ENCODE measurements at regions of chr3 and their contacts with region 1.

Region 1: DNA sequence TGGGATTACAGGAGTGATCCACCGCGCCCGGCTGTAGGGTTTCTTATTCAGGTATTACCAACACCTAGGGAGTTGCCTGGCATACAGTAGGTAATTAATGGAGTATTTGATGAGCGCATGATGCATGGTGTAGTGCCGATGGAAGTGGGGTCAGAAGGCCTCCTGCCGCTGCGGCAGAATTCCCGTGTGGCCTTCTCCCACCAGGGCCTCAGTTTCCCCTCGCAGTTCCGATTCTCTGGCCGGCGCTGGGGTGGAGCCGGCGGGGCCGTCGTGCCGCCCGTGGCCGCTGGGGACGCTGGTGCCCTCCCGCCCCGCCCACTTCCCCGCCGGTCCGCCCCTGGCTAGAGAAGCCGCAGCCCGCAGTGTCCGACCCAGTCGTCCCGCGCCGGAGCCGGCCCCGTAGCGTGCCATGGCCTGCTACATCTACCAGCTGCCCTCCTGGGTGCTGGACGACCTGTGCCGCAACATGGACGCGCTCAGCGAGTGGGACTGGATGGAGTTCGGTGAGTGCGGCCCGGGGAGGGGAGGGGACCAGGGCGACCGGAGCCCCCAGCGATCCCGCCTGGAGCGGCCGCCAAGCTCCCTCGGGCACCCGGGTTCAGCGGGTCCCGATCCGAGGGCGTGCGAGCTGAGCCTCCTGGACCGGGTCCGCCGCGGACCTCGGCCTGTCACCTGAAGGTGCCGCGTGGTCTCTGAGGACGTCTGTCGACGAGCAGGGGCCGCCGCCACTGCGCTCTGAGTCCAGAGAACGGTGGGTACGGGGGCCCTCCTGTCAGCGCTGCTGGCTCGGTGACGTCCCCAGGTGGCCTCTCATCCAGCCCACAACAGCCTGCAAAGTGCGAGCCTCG is at the start of gene IRAK2:
- DNase-seq: peak; percentile 71
- ATAC-seq: peak; percentile 91
- H3K4me3 ChIP-seq: peak within 1 kb of the TSS; percentile 96
- H3K27ac ChIP-seq: peak within 1 kb of the TSS; percentile 33
- H3K4me1 ChIP-seq: no peaks in the 10 kb centered on the region
- H3K27me3 ChIP-seq: no peaks in the 10 kb centered on the region
- CTCF ChIP-seq: peak; percentile 53
- total RNA-seq, gene IRAK2: 4.7 and 5.5 TPM in 2 replicates

Region 2: GRCh38 chr3:10099041-10099440 is 65.7 kb before region 1 on chr3:
- CTCF ChIA-PET with region 1: no interaction called
- POLR2A ChIA-PET with region 1: interaction called, 22 read pairs
- intact Hi-C with region 1: no loop called
- DNase-seq: no peak
- ATAC-seq: no peak
- H3K4me3 ChIP-seq: no peak overlapping the region
- H3K27ac ChIP-seq: no peak overlapping the region
- H3K4me1 ChIP-seq: no peaks in the 10 kb centered on the region
- H3K27me3 ChIP-seq: no peaks in the 10 kb centered on the region
- CTCF ChIP-seq: no peak

Region 3: GRCh38 chr3:10142707-10143566 is 21.8 kb before region 1 on chr3:
- CTCF ChIA-PET with region 1: no interaction called
- POLR2A ChIA-PET with region 1: interaction called, 16 read pairs
- intact Hi-C with region 1: no loop called
- DNase-seq: peak; percentile 48
- ATAC-seq: peak; percentile 14
- H3K4me3 ChIP-seq: peak overlapping the region; percentile 97
- H3K27ac ChIP-seq: peak overlapping the region; percentile 63
- H3K4me1 ChIP-seq: peaks cover 10% of the 10 kb centered on the region; the same call in 1 of the 2 replicates
- H3K27me3 ChIP-seq: no peaks in the 10 kb centered on the region
- CTCF ChIP-seq: no peak

Region 4: DNA sequence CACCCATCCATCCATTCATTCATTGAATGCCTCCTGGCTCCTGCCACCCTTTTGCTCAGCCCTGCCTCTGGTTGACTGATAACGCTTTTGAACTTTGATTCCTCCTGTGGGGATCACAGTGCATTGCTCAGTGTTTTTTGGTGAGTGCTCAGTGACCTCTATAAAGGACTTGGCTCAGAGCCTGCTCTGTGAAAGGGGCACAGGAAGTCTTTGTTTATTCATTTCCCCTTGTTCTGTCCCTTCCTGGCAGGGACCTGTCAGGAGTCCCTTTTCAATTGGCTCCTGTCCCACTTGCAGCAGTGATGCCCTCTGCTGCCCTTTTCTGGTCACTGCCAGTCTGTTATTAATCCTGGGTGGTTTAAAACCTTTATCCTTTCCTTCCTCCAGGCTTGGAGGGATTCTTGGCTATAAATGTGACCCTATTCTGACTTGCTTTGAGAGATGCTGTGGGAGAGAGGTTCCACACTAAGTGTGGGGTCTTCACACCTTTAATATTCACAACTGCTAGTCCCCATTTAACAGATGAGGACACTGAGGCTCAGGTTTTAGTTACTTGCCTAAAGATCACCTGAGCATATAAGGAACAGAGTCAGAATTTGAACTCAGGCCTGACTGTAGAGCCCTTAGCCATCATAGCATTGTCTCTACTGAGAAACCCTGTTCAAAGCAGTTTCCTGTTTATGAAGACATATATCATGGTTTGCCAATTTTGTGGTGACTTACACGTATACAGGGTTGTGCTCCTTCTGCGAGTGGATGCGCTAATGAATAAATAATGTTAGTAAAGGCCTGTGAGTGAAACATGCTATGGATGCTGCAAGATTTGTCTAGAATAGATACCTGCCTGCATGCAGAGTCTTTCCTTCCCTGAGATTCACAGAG is 60.3 kb after region 1 on chr3:
- CTCF ChIA-PET with region 1: interaction called, 4 read pairs
- POLR2A ChIA-PET with region 1: no interaction called
- intact Hi-C with region 1: loop called (anchors 1 kb)
- DNase-seq: peak; percentile 92
- ATAC-seq: peak; percentile 50
- H3K4me3 ChIP-seq: no peak overlapping the region
- H3K27ac ChIP-seq: no peak overlapping the region
- H3K4me1 ChIP-seq: peaks cover 36% of the 10 kb centered on the region
- H3K27me3 ChIP-seq: no peaks in the 10 kb centered on the region
- CTCF ChIP-seq: peak; percentile 96